Endothelial cell of umbilical vein (primary cell): ENCODE measurements at regions of chr10 and their contacts with region 1.

Region 1: DNA sequence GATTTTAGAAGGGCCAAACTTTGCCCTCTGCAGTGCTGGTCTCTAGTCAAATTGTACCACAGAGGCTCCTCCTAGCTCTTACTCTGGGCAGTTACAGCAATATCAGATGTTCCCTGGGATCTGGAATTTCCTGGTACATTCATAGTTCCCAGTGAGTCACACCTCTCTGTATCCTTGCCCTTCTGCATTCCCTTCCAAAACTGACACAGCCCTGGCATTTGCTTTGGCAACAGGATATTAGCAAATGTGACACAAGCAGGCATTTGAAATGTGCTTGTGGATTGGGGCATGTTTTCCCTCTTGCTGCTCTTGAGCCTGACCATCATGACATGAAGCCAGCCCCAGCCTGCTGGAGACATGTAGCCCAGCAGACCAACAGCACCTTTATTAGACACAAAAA is 284.7 kb upstream of the AKR1E2 start:
- DNase-seq: peak; percentile 94
- H3K4me3 ChIP-seq: no peak overlapping the region
- H3K27ac ChIP-seq: peak overlapping the region; percentile 93
- H3K4me1 ChIP-seq: peaks cover 10% of the 10 kb centered on the region
- H3K27me3 ChIP-seq: no peaks in the 10 kb centered on the region
- CTCF ChIP-seq: peak in 1 of 2 donors; percentile 18
- POLR2A ChIP-seq: no peak

Region 2: GRCh38 chr10:3935141-3935540 is 606.2 kb before region 1 on chr10:
- CTCF ChIA-PET with region 1: no interaction called
- POLR2A ChIA-PET with region 1: no interaction called
- dilution Hi-C with region 1: no loop called
- intact Hi-C with region 1: loop called (anchors 2 kb)
- DNase-seq: peak; percentile 26
- H3K4me3 ChIP-seq: no peak overlapping the region
- H3K27ac ChIP-seq: peak overlapping the region; percentile 75
- H3K4me1 ChIP-seq: peaks cover 24% of the 10 kb centered on the region
- H3K27me3 ChIP-seq: no peaks in the 10 kb centered on the region
- CTCF ChIP-seq: no peak
- POLR2A ChIP-seq: no peak

Region 3: GRCh38 chr10:4498711-4499251 is 42.5 kb before region 1 on chr10:
- CTCF ChIA-PET with region 1: no interaction called
- POLR2A ChIA-PET with region 1: no interaction called
- dilution Hi-C with region 1: no loop called
- intact Hi-C with region 1: loop called (anchors 2 kb)
- DNase-seq: peak; percentile 41
- H3K4me3 ChIP-seq: no peak overlapping the region
- H3K27ac ChIP-seq: no peak overlapping the region
- H3K4me1 ChIP-seq: peaks cover 15% of the 10 kb centered on the region
- H3K27me3 ChIP-seq: no peaks in the 10 kb centered on the region
- CTCF ChIP-seq: no peak
- POLR2A ChIP-seq: no peak

Region 4: DNA sequence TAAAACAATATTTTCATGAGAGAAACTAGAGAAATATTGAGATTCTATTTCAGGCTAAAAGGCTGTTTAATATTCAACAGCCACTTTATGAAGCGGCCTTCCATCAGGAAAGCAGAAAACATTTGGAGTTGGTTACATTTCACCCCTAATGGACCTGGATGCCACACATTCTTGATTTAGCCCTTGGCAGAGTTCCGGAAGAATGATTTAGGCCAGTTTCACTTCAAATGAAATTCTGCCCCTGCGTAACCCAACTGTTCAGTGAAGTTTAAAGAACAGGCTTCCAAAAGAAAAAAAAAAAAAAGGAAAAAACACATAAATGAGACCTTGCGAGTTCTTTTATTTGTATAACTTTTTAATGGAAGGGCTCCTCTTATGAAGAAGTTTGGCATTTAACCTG is 45.5 kb after region 1 on chr10:
- CTCF ChIA-PET with region 1: no interaction called
- POLR2A ChIA-PET with region 1: no interaction called
- dilution Hi-C with region 1: no loop called
- intact Hi-C with region 1: no loop called
- DNase-seq: no peak
- H3K4me3 ChIP-seq: no peak overlapping the region
- H3K27ac ChIP-seq: no peak overlapping the region
- H3K4me1 ChIP-seq: no peaks in the 10 kb centered on the region
- H3K27me3 ChIP-seq: no peaks in the 10 kb centered on the region
- CTCF ChIP-seq: no peak
- POLR2A ChIP-seq: no peak

Region 5: DNA sequence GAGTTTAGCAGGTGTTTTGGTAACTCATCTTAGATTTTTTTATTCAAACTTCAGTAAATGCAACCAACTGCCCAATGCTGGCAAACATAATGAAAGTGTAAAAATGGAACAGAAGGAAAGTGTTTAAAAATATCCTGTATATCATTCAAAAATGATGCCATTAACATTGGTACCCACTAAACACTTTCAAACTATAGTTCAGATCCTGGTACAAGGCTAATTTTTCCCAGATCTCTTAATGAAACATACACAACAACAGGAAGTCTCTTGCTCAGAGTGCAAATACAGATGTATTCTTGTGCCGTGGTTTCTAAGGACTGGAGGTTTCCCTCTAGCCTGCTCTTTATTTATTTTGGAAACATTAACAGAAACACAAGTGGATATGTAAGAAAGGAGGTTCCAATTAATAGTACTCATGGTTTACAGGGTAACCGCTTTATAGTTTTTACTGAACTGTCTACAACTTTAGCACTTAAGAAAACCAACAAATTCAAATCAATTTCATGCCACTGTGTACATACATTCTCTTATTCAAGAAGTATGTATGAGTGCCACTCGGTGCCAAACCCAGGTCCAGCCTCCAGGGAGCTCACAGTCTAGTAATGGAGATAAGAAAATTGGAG is 108.7 kb after region 1 on chr10:
- CTCF ChIA-PET with region 1: no interaction called
- POLR2A ChIA-PET with region 1: no interaction called
- dilution Hi-C with region 1: no loop called
- intact Hi-C with region 1: loop called (anchors 5 kb)
- DNase-seq: peak; percentile 92
- H3K4me3 ChIP-seq: no peak overlapping the region
- H3K27ac ChIP-seq: peak overlapping the region; percentile 4
- H3K4me1 ChIP-seq: peaks cover 35% of the 10 kb centered on the region
- H3K27me3 ChIP-seq: no peaks in the 10 kb centered on the region
- CTCF ChIP-seq: no peak
- POLR2A ChIP-seq: no peak

Region 6: GRCh38 chr10:4807761-4808507 is 266.6 kb after region 1 on chr10:
- CTCF ChIA-PET with region 1: no interaction called
- POLR2A ChIA-PET with region 1: no interaction called
- dilution Hi-C with region 1: no loop called
- intact Hi-C with region 1: loop called (anchors 1 kb)
- DNase-seq: peak; percentile 93
- H3K4me3 ChIP-seq: no peak overlapping the region
- H3K27ac ChIP-seq: peak overlapping the region; percentile 95
- H3K4me1 ChIP-seq: peaks cover 53% of the 10 kb centered on the region
- H3K27me3 ChIP-seq: no peaks in the 10 kb centered on the region
- CTCF ChIP-seq: no peak
- POLR2A ChIP-seq: peak; percentile 47

Region 7: DNA sequence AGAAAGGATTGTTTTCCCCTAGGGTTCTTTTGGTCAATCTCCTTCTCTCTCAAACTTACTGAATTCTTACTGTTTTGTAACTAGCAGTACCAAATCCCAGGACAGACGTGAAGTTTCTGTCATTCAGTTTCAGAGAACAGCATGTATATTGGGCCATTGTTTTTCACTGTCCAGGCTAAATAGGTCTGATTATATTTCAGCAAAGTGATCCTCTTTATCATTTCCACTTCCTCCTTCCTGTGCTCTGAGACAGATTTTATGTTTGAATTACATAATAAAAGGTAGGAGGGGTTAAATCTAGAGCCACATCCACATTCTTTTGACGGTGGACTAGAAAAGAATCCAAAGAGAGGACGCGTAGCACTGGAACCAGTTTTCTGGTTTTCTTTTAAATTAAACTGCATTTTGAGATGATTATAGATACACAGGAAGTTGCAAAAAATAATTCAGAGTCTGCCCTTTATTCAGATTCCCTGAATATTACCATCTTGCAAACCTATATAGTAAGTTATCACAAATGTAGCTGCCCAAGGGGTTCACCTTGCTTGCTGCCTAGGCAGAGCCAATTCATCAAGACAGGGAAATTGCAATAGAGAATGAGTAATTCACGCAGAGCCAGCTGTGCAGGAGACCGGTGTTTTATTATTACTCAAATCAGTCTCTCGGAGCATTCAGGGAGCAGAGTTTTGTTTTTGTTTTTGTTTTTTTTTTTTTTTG is 324.8 kb after region 1 on chr10:
- CTCF ChIA-PET with region 1: no interaction called
- POLR2A ChIA-PET with region 1: no interaction called
- dilution Hi-C with region 1: no loop called
- intact Hi-C with region 1: no loop called
- DNase-seq: no peak
- H3K4me3 ChIP-seq: no peak overlapping the region
- H3K27ac ChIP-seq: no peak overlapping the region
- H3K4me1 ChIP-seq: peaks cover 13% of the 10 kb centered on the region
- H3K27me3 ChIP-seq: no peaks in the 10 kb centered on the region
- CTCF ChIP-seq: no peak
- POLR2A ChIP-seq: no peak

Region 8: DNA sequence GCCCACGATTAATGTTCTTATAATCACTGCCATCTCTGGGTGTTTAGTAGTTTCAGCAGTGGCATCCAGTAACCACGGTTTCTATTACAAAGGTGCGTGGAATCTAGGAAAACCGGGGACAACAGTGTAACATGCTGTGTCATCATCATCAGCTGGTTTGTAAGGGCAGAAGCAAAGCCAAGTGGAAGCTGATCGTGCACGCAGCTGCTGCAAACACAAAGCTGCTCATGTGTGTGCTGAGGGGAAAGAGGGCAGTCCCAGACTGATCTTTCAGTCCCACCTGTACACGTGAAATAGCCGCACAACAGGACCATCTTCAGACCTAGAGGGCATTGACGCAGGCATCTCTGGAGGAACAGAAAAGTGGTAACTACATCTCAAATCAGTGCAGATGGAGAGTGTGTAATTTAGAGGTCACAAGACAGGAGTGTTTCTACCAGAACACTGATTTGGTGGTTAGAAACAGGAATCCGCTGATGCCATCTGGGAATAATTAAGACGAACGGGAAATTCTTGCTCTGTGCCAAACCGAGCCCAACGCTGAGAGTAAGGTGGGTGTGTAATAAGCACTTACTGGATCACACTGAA is 1335.0 kb after region 1 on chr10:
- CTCF ChIA-PET with region 1: no interaction called
- POLR2A ChIA-PET with region 1: no interaction called
- dilution Hi-C with region 1: no loop called
- intact Hi-C with region 1: no loop called
- DNase-seq: no peak
- H3K4me3 ChIP-seq: no peak overlapping the region
- H3K27ac ChIP-seq: no peak overlapping the region
- H3K4me1 ChIP-seq: no peaks in the 10 kb centered on the region
- H3K27me3 ChIP-seq: no peaks in the 10 kb centered on the region
- CTCF ChIP-seq: no peak
- POLR2A ChIP-seq: no peak